ENCODE measurements at regions of chr22 and their contacts with region 1.

Region 1: GRCh38 chr22:31223786-31224191 is 11.7 kb downstream of the LIMK2 start:
- DNase-seq: peak; percentile 26
- H3K4me3 ChIP-seq: no peak overlapping the region
- H3K27ac ChIP-seq: no peak overlapping the region
- H3K4me1 ChIP-seq: peaks cover 5% of the 10 kb centered on the region
- H3K27me3 ChIP-seq: no peaks in the 10 kb centered on the region
- CTCF ChIP-seq: no peak

Region 2: GRCh38 chr22:31055635-31056159 is 168.1 kb before region 1 on chr22:
- CTCF ChIA-PET with region 1: no interaction called
- dilution Hi-C with region 1: no loop called
- in situ Hi-C with region 1: no loop called
- intact Hi-C with region 1: no loop called
- DNase-seq: peak; percentile 96
- H3K4me3 ChIP-seq: no peak overlapping the region
- H3K27ac ChIP-seq: peak overlapping the region; percentile 53
- H3K4me1 ChIP-seq: peaks cover 16% of the 10 kb centered on the region
- H3K27me3 ChIP-seq: no peaks in the 10 kb centered on the region
- CTCF ChIP-seq: no peak

Region 3: DNA sequence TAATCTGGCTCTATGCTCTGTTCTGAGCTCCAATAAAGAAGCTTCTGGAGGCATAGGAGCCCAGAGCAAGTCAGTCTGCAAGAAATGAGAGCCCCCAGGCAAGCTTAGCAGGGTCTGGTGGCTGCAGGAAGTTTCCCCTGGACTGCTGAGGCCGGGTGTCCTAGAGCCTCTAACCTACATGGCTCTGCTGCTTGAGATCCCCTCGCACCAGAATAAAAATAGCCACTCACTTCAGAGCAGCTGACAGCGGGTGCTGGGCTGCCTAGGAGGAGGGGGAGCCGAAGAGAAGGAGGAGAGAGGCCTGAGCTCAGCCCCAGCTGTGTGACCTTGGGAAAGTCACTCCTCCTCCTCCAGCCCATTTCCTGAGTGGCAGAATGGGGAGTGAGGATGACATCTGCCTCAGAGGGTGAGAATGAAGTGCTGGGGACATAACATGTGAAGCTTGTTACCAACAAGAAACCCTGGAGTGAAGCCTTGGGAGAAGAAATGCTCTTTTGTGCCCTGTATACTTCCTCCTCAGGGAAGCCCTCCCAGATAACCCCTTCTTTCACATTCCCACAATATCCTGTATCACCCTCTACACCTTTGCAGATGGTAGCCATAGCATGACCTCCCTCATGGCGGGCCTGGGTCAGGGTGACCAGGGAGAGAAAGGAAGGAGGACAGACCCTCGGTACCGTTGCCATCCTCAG is 104.6 kb before region 1 on chr22:
- CTCF ChIA-PET with region 1: no interaction called
- dilution Hi-C with region 1: loop called (anchors 5 kb)
- in situ Hi-C with region 1: no loop called
- intact Hi-C with region 1: no loop called
- DNase-seq: no peak
- H3K4me3 ChIP-seq: no peak overlapping the region
- H3K27ac ChIP-seq: no peak overlapping the region
- H3K4me1 ChIP-seq: peaks cover 7% of the 10 kb centered on the region
- H3K27me3 ChIP-seq: no peaks in the 10 kb centered on the region
- CTCF ChIP-seq: no peak

Region 4: DNA sequence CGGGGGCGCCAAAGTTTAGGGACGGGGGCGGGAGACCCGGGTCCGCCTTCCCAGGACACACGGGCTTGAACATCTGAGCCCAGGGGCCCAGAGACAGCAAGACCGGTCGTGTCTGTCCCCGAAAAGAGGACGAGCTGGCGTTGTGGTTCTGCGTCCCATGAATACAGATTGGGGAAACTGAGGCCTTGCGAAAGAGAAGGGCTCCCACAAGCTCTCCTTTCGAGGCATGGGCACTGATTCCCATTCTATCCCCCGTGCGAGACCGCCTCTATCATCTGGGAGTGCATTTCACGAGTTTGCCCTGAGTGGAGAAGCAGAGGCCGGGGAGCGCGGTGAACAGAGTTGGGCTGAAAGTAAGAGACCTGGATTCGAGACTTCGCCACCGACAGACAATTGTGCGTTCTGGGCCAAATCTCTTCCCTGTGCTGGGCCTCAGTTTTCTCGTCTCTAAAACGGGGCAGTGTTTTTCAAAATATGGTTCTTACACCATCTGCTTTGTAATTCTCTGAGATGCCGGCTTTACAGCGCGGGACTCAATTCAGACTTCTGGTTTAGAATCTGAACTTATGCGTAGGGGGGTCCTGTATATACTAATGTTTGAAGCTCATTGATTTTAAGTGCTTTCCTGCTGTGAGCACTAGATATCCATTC is 63.3 kb before region 1 on chr22:
- CTCF ChIA-PET with region 1: no interaction called
- dilution Hi-C with region 1: no loop called
- in situ Hi-C with region 1: no loop called
- intact Hi-C with region 1: no loop called
- DNase-seq: no peak
- H3K4me3 ChIP-seq: peak overlapping the region; percentile 72 to 95 (median 89)
- H3K27ac ChIP-seq: peak overlapping the region; percentile 79
- H3K4me1 ChIP-seq: peaks cover 21% of the 10 kb centered on the region
- H3K27me3 ChIP-seq: no peaks in the 10 kb centered on the region
- CTCF ChIP-seq: no peak

Region 5: DNA sequence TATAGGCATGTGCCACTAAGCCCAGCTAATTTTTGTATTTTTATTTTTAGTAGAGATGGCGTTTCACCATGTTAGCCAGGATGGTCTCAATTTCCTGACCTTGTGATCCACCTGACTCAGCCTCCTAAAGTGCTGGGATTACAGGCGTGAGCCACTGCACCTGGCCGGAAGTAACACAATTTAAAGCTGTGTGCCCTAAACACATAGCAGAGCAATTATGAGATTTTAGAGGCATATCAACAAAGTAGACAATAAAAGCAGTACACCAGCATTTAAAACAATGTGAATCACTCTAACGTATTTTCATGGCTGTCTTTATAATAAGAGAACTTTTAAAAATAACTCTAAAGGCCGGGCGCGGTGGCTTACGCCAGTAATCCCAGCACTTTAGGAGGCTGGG is 483.7 kb after region 1 on chr22:
- CTCF ChIA-PET with region 1: no interaction called
- dilution Hi-C with region 1: no loop called
- in situ Hi-C with region 1: no loop called
- intact Hi-C with region 1: no loop called
- DNase-seq: no peak
- H3K4me3 ChIP-seq: no peak overlapping the region
- H3K27ac ChIP-seq: no peak overlapping the region
- H3K4me1 ChIP-seq: no peaks in the 10 kb centered on the region
- H3K27me3 ChIP-seq: no peaks in the 10 kb centered on the region
- CTCF ChIP-seq: no peak

Measured in mammary epithelial cell (primary cell).